Left lung (tissue), 14 donors: ENCODE measurements at regions of chr5 and their contacts with region 1.

Region 1: GRCh38 chr5:131170540-131171275 is at the start of gene LYRM7:
- DNase-seq: peak; percentile 93 to 99 (median 98)
- ATAC-seq: peak; percentile 99
- H3K4me3 ChIP-seq: peak within 1 kb of the TSS; percentile 71 to 73
- H3K27ac ChIP-seq: peak within 1 kb of the TSS; percentile 74 to 87
- H3K4me1 ChIP-seq: peaks cover 8 to 9% of the 10 kb centered on the region in 2 donors
- H3K27me3 ChIP-seq: no peaks in the 10 kb centered on the region
- CTCF ChIP-seq: no peak
- polyA plus RNA-seq, gene LYRM7: 11.2 to 17.5 (median 14.1) TPM

Region 2: DNA sequence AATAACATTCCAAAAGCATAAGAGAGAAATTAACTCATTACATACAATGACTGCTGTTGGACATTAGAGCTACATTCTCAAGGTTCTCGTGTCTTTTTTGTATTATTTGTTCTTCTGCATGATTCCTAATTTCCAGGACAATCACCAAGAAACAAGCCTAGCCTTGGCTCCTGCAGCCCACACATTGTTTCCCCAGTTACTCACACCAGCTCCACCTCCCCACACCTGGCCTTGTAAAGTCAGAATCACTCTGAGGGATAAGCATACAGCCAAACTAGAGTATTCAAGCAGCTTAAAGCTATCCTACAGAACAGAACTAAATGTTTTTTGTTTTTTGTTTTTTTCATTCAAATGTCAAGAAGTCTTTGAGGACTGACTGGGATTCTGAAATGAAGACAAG is 194.9 kb before region 1 on chr5:
- intact Hi-C with region 1: no loop called
- DNase-seq: no peak
- ATAC-seq: peak; percentile 57
- H3K4me3 ChIP-seq: no peak overlapping the region
- H3K27ac ChIP-seq: no peak overlapping the region
- H3K4me1 ChIP-seq: no peaks in the 10 kb centered on the region
- H3K27me3 ChIP-seq: no peaks in the 10 kb centered on the region
- CTCF ChIP-seq: no peak

Region 3: GRCh38 chr5:131289738-131290137 is 119.0 kb after region 1 on chr5:
- intact Hi-C with region 1: no loop called
- DNase-seq: no peak
- ATAC-seq: peak; percentile 41
- H3K4me3 ChIP-seq: no peak overlapping the region
- H3K27ac ChIP-seq: peak overlapping the region in 1 of 2 donors; percentile 1
- H3K4me1 ChIP-seq: no peaks in the 10 kb centered on the region
- H3K27me3 ChIP-seq: no peaks in the 10 kb centered on the region
- CTCF ChIP-seq: no peak

Region 4: DNA sequence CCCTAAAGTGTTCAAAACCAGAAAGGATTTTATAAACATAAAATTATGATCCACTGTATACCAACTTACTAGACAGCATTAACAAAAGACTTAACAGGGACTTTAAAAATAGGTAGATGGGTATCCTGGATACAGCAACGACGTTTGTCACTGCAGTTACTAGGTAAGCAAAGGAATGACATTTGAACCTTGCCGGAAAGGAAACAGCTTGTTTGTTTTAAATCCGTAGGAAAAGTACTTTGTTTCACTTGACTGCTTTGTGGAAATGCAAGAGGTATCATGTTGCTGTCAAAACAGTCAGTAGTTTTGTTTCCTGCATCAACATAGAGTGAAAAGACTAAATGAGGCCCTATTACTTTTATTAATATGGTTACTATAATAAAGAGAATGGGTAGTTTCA is 216.1 kb after region 1 on chr5:
- intact Hi-C with region 1: loop called in 1 of 2 experiments (anchors 5 kb)
- DNase-seq: peak in 1 of 4 donors; percentile 31
- ATAC-seq: peak; percentile 22
- H3K4me3 ChIP-seq: no peak overlapping the region
- H3K27ac ChIP-seq: peak overlapping the region; percentile 1 to 31
- H3K4me1 ChIP-seq: peaks cover 0 to 28% of the 10 kb centered on the region in 2 donors
- H3K27me3 ChIP-seq: no peaks in the 10 kb centered on the region
- CTCF ChIP-seq: no peak